ENCODE measurements at regions of chr17 and their contacts with region 1.

Region 1: DNA sequence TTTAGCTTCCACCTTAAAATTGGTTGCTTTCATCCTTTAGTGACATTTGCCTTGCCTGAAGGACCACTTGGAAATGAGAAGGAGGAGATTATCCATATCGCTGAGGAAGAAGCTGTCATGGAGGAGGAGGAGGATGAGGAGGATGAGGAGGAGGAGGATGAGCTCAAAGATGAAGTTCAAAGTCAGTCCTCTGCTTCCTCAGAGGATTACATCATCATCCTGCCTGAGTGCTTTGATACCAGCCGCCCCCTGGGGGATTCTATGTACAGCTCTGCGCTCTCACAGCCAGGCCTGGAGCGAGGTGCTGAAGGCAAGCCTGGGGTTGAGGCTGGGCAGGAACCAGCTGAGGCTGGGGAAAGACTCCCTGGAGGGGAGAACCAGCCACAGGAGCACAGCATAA is 11.5 kb upstream of the TMEM106A start:
- DNase-seq: no peak
- ATAC-seq: no peak
- H3K4me3 ChIP-seq: no peak overlapping the region
- H3K27ac ChIP-seq: no peak overlapping the region
- H3K4me1 ChIP-seq: no peaks in the 10 kb centered on the region
- H3K27me3 ChIP-seq: no peaks in the 10 kb centered on the region
- CTCF ChIP-seq: no peak
- POLR2A ChIP-seq: no peak

Region 2: DNA sequence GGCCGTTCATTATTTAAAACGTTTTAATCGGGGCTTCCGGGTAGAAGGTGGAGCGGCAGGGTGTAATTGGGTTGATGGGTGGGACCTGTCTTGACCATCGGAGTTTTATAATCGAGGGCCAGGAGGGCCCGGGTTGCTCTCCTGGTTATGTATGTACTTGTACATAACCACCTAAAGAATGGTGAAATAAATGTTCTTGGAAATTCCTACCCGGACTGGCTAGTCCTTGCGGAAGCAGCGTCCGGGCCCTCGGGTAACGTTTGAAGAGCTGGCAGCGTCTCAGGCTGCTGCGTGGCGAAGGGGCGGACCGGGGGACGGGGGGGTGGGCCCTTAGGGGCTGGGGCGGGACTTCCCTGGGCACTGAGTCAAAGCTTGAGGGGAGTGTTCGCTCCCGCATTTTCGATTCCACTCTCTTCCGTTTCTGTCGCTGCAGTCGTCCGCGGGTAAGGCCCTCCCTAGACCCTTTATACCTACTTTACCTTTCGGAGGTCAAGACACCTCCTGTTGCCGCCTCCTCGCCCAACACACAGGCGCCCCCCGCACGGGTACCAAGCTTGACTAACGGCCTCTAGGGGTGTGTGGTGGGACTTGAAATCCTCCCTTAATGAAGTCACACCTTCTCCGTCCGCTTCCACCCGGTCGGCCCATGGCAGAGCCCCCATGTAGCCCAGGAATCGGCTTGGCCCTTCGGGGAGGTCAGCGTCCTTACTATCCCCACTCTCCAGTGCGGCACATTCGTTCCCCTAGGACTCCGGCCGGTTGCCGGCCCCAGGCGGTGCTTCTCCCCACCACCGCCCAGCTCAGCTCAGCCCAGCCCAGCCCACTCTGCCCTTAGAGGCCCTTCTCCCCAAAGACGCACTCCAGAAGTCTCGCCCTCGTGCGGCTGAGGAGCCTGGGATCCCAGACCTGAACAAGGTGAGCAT is 11.6 kb after region 1 on chr17 and contains the start of gene TMEM106A:
- in situ Hi-C with region 1: no loop called
- intact Hi-C with region 1: loop called (anchors 1 kb)
- DNase-seq: peak; percentile 44 to 45
- ATAC-seq: peak; percentile 67 to 70
- H3K4me3 ChIP-seq: peak within 1 kb of the TSS; percentile 51 to 63 (median 54)
- H3K27ac ChIP-seq: peak within 1 kb of the TSS; percentile 51 to 75 (median 62)
- H3K4me1 ChIP-seq: no peaks in the 10 kb centered on the region
- H3K27me3 ChIP-seq: no peaks in the 10 kb centered on the region
- CTCF ChIP-seq: peak in 2 of 5 experiments; percentile 13 to 20
- POLR2A ChIP-seq: peak; percentile 4 to 19
- total RNA-seq, gene TMEM106A: 0.32 to 5.6 (median 2.5) TPM

Measured in gastrocnemius medialis (tissue), 4 donors.